HCT116 (cell line): ENCODE measurements at regions of chr11 and their contacts with region 1.

Region 1: GRCh38 chr11:72598906-72599305 is 75.3 kb downstream of the PDE2A start:
- DNase-seq: no peak
- ATAC-seq: peak; percentile 84
- H3K4me3 ChIP-seq: no peak overlapping the region
- H3K27ac ChIP-seq: no peak overlapping the region
- H3K4me1 ChIP-seq: peaks cover 0 to 15% of the 10 kb centered on the region in 2 experiments; a peak in 2 of 4 replicates
- H3K27me3 ChIP-seq: no peaks in the 10 kb centered on the region
- CTCF ChIP-seq: peak; percentile 59 to 67 (median 61); a peak in 5 of 6 replicates
- POLR2A ChIP-seq: no peak
- RAD21 ChIP-seq: peak; percentile 62

Region 2: GRCh38 chr11:72585762-72586311 is 13.1 kb before region 1 on chr11:
- CTCF ChIA-PET with region 1: interaction called, 10 read pairs
- POLR2A ChIA-PET with region 1: no interaction called
- RAD21 ChIA-PET with region 1: interaction called in 1 of 2 experiments, 4 read pairs
- intact Hi-C with region 1: no loop called
- DNase-seq: peak; percentile 38
- ATAC-seq: peak; percentile 94
- H3K4me3 ChIP-seq: no peak overlapping the region
- H3K27ac ChIP-seq: no peak overlapping the region
- H3K4me1 ChIP-seq: peaks cover 0 to 6% of the 10 kb centered on the region in 2 experiments; a peak in 1 of 4 replicates
- H3K27me3 ChIP-seq: no peaks in the 10 kb centered on the region
- CTCF ChIP-seq: peak; percentile 82 to 88 (median 85)
- POLR2A ChIP-seq: no peak
- RAD21 ChIP-seq: peak; percentile 86

Region 3: GRCh38 chr11:72609045-72609444 is 10.1 kb after region 1 on chr11:
- CTCF ChIA-PET with region 1: interaction called, 17 read pairs
- POLR2A ChIA-PET with region 1: no interaction called
- RAD21 ChIA-PET with region 1: no interaction called
- intact Hi-C with region 1: no loop called
- DNase-seq: no peak
- ATAC-seq: peak; percentile 68
- H3K4me3 ChIP-seq: peak overlapping the region in 1 of 2 experiments; percentile 29; a peak in 2 of 4 replicates
- H3K27ac ChIP-seq: no peak overlapping the region
- H3K4me1 ChIP-seq: peaks cover 11 to 30% of the 10 kb centered on the region in 2 experiments
- H3K27me3 ChIP-seq: peaks cover 47% of the 10 kb centered on the region
- CTCF ChIP-seq: peak; percentile 31 to 77 (median 71); a peak in 5 of 6 replicates
- POLR2A ChIP-seq: no peak
- RAD21 ChIP-seq: no peak

Region 4: GRCh38 chr11:72631806-72632731 is 33.2 kb after region 1 on chr11:
- CTCF ChIA-PET with region 1: interaction called, 5 read pairs
- POLR2A ChIA-PET with region 1: no interaction called
- RAD21 ChIA-PET with region 1: no interaction called
- intact Hi-C with region 1: loop called (anchors 1 kb)
- DNase-seq: no peak
- ATAC-seq: peak; percentile 23; the same call in 1 of the 2 replicates
- H3K4me3 ChIP-seq: no peak overlapping the region
- H3K27ac ChIP-seq: no peak overlapping the region
- H3K4me1 ChIP-seq: peaks cover 2 to 6% of the 10 kb centered on the region in 2 experiments
- H3K27me3 ChIP-seq: no peaks in the 10 kb centered on the region
- CTCF ChIP-seq: no peak
- POLR2A ChIP-seq: no peak
- RAD21 ChIP-seq: no peak

Region 5: GRCh38 chr11:72642884-72643511 is 44.1 kb after region 1 on chr11:
- CTCF ChIA-PET with region 1: interaction called, 14 read pairs
- POLR2A ChIA-PET with region 1: interaction called, 4 read pairs
- RAD21 ChIA-PET with region 1: interaction called in 1 of 2 experiments, 7 read pairs
- intact Hi-C with region 1: loop called (anchors 1 kb)
- DNase-seq: peak; percentile 32
- ATAC-seq: peak; percentile 80
- H3K4me3 ChIP-seq: peak overlapping the region; percentile 44 to 59
- H3K27ac ChIP-seq: no peak overlapping the region; the same call in 1 of the 2 replicates
- H3K4me1 ChIP-seq: peaks cover 4 to 22% of the 10 kb centered on the region in 2 experiments; a peak in 3 of 4 replicates
- H3K27me3 ChIP-seq: peaks cover 13% of the 10 kb centered on the region; the same call in 1 of the 2 replicates
- CTCF ChIP-seq: peak; percentile 74 to 86 (median 78)
- POLR2A ChIP-seq: no peak
- RAD21 ChIP-seq: peak; percentile 86

Region 6: DNA sequence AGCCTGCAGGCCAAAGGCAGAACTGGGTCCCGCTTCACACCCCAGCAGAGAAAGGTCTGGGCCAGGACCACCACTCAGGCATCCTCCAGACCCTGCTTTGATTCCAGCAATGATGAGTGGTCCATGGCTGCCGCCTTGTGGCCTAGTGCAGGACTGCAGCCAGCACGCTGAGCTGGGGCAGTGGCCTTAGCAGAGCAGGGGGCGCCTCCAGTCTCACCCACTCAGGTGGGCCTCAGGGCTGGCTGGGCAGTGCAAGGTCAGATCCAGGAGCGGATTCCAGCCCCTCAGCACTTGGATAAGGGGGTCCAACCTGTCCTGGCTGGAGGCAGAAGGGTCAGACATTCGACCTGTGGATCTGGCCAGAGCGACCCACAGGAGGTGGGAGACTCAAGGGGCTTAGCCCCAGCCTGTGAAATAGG is 84.9 kb after region 1 on chr11:
- CTCF ChIA-PET with region 1: interaction called, 31 read pairs
- POLR2A ChIA-PET with region 1: no interaction called
- RAD21 ChIA-PET with region 1: interaction called in 1 of 2 experiments, 11 read pairs
- intact Hi-C with region 1: no loop called
- DNase-seq: no peak
- ATAC-seq: peak; percentile 74
- H3K4me3 ChIP-seq: no peak overlapping the region
- H3K27ac ChIP-seq: no peak overlapping the region
- H3K4me1 ChIP-seq: peaks cover 0 to 13% of the 10 kb centered on the region in 2 experiments; a peak in 3 of 4 replicates
- H3K27me3 ChIP-seq: peaks cover 17% of the 10 kb centered on the region
- CTCF ChIP-seq: peak; percentile 88 to 96 (median 96)
- POLR2A ChIP-seq: no peak
- RAD21 ChIP-seq: peak; percentile 88

Region 7: GRCh38 chr11:72831513-72832300 is 232.8 kb after region 1 on chr11:
- CTCF ChIA-PET with region 1: no interaction called
- POLR2A ChIA-PET with region 1: no interaction called
- RAD21 ChIA-PET with region 1: no interaction called
- intact Hi-C with region 1: no loop called
- DNase-seq: peak; percentile 54
- ATAC-seq: peak; percentile 98
- H3K4me3 ChIP-seq: no peak overlapping the region
- H3K27ac ChIP-seq: no peak overlapping the region
- H3K4me1 ChIP-seq: peaks cover 0 to 6% of the 10 kb centered on the region in 2 experiments; a peak in 2 of 4 replicates
- H3K27me3 ChIP-seq: no peaks in the 10 kb centered on the region
- CTCF ChIP-seq: peak; percentile 91 to 97 (median 93)
- POLR2A ChIP-seq: no peak
- RAD21 ChIP-seq: peak; percentile 95